Vagina (tissue), 2 donors: ENCODE measurements at regions of chr3 and their contacts with region 1.

Region 1: GRCh38 chr3:146177519-146177918 is 16.5 kb upstream of the PLOD2 start:
- DNase-seq: no peak
- H3K4me3 ChIP-seq: no peak overlapping the region
- H3K27ac ChIP-seq: no peak overlapping the region
- H3K4me1 ChIP-seq: no peaks in the 10 kb centered on the region
- H3K27me3 ChIP-seq: no peaks in the 10 kb centered on the region
- CTCF ChIP-seq: no peak
- POLR2A ChIP-seq: no peak

Region 2: DNA sequence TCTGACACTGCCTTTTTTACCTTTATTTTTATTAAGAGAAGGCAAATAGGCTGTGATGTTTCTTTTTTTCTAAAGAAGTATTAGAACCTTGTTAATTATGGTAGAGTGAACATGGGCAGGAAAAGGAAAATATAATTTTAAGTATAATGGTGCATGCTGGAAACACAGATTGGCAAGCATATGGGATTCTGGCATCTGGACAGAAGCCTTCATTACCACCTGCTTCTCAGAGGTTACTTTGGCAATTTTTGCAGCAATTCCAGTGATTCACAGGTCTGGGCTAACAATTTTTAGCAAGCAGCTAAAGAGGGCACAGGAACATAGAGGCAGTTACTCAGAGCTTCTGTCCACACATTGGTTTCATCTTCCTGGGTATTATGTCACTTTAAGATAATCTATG is 1947.6 kb before region 1 on chr3:
- intact Hi-C with region 1: loop called (anchors 10 kb)
- DNase-seq: no peak
- H3K4me3 ChIP-seq: no peak overlapping the region
- H3K27ac ChIP-seq: no peak overlapping the region
- H3K4me1 ChIP-seq: no peaks in the 10 kb centered on the region
- H3K27me3 ChIP-seq: no peaks in the 10 kb centered on the region
- CTCF ChIP-seq: no peak
- POLR2A ChIP-seq: no peak